Astrocyte of the cerebellum (primary cell): ENCODE measurements at regions of chr10 and their contacts with region 1.

Region 1: GRCh38 chr10:112558476-112559142 is 111.6 kb downstream of the VTI1A start:
- DNase-seq: no peak
- H3K4me3 ChIP-seq: no peak overlapping the region
- CTCF ChIP-seq: no peak

Region 2: GRCh38 chr10:112639298-112639697 is 80.7 kb after region 1 on chr10:
- in situ Hi-C with region 1: loop called (anchors 5 kb)
- DNase-seq: no peak
- H3K4me3 ChIP-seq: no peak overlapping the region
- CTCF ChIP-seq: no peak

Region 3: GRCh38 chr10:112650588-112651030 is 92.0 kb after region 1 on chr10:
- in situ Hi-C with region 1: no loop called
- DNase-seq: no peak
- H3K4me3 ChIP-seq: no peak overlapping the region
- CTCF ChIP-seq: no peak